HAP-1 (cell line): ENCODE measurements at regions of chr12 and their contacts with region 1.

Region 1: DNA sequence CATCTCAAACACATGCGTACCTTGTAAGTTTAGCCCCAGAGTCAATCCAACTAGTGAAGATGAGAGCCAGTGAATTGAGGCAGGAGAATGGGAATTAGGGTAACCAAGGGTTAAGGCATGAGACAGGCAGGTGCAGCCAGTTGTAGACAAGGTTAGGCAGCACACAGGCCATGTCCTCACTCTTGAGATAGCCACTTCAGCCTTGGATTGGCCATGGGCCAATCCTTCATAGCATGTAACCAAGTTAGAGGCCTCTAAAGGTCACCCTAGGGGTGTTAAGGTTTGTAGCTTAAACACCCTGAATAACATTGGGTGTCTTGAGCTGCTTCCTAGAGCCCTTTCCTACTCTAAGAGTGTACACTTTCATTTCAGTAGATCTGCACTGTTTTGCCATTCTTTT is 208.2 kb upstream of the RBM19 start:
- DNase-seq: no peak
- H3K4me3 ChIP-seq: no peak overlapping the region
- H3K4me1 ChIP-seq: no peaks in the 10 kb centered on the region
- H3K27me3 ChIP-seq: 0 out of 2 replicates have a peak, but pooled peaks cover 9% of the 10 kb centered on the region

Region 2: DNA sequence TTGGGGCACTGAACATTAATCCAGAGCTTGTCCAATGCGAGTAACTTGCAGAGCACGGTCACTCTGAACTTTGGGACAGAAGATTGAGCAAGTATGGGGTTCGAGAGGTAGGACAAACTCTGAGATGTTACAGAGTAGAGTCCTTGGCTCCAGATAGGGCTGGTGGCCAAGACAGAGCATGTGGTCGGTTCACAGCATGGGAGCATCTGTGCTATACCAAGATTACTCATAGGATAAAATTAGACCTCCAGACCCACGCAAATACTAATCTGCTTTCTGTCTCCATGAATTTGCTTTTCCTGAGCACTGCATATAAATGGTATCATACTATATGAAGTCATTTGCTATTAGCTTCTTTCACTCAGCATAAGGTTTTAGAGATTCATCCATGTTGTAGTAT is 325.0 kb after region 1 on chr12:
- in situ Hi-C with region 1: loop called (anchors 10 kb)
- DNase-seq: no peak
- H3K4me3 ChIP-seq: no peak overlapping the region
- H3K4me1 ChIP-seq: no peaks in the 10 kb centered on the region
- H3K27me3 ChIP-seq: peaks cover 40% of the 10 kb centered on the region